Activated naive CD4-positive, alpha-beta T cell treated with anti-CD3 and anti-CD28 coated beads for 36 hours (primary cell): ENCODE measurements at regions of chr2 and their contacts with region 1.

Region 1: DNA sequence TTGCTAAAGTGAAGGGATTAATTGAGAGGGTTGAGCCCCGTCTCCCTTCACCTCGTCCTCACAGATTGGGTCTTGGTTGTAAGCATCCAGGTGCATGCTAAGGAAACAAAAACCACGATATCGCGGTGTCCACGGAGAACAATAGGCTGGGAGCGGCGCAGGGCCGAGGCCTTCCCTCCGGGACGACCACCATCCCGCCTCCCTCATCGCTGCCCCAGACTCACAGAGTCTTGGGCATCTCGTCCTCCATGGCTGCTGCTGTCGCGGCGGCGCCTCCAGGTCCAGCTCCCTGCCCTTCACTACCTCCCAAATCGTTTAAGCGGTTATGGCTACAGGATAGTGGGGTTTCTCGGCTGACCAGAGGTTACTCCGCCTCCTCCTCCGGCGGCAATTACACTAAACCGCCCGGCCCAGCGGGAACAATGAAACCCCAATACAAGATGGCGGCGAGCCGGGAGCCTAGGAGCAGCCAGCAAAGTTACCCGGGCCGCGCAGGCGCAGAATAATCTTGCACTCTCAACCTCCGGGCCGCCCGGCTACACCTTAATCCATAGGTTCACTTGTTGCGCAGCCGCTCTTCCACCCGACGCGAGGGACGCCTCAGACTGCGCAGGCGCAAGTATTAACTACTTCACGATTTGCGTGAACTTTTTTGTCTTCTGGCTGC is at the start of gene TIA1:
- DNase-seq: peak; percentile 99
- H3K4me3 Mint-ChIP-seq: peak within 1 kb of the TSS; percentile 99
- H3K27ac Mint-ChIP-seq: peak within 1 kb of the TSS; percentile 98
- H3K4me1 Mint-ChIP-seq: peaks cover 32% of the 10 kb centered on the region
- H3K27me3 Mint-ChIP-seq: no peaks in the 10 kb centered on the region
- total RNA-seq, gene TIA1: 83.2 to 83.9 TPM

Region 2: GRCh38 chr2:68336192-68336591 is 1912.1 kb before region 1 on chr2:
- CTCF ChIA-PET with region 1: no interaction called
- intact Hi-C with region 1: no loop called
- DNase-seq: no peak
- H3K4me3 Mint-ChIP-seq: no peak overlapping the region
- H3K27ac Mint-ChIP-seq: no peak overlapping the region
- H3K4me1 Mint-ChIP-seq: no peaks in the 10 kb centered on the region
- H3K27me3 Mint-ChIP-seq: peaks cover 17% of the 10 kb centered on the region

Region 3: GRCh38 chr2:69893684-69894551 is 354.4 kb before region 1 on chr2 and contains the start of gene SNRNP27:
- CTCF ChIA-PET with region 1: no interaction called
- intact Hi-C with region 1: loop called (anchors 5 kb)
- DNase-seq: peak; percentile 91
- H3K4me3 Mint-ChIP-seq: peak within 1 kb of the TSS; percentile 98
- H3K27ac Mint-ChIP-seq: peak within 1 kb of the TSS; percentile 97
- H3K4me1 Mint-ChIP-seq: peaks cover 41% of the 10 kb centered on the region
- H3K27me3 Mint-ChIP-seq: no peaks in the 10 kb centered on the region
- total RNA-seq, gene SNRNP27: 56.7 to 64.6 TPM

Region 4: GRCh38 chr2:70070541-70071268 is 177.6 kb before region 1 on chr2:
- CTCF ChIA-PET with region 1: no interaction called
- intact Hi-C with region 1: loop called (anchors 5 kb)
- DNase-seq: peak; percentile 76
- H3K4me3 Mint-ChIP-seq: peak overlapping the region; percentile 54
- H3K27ac Mint-ChIP-seq: peak overlapping the region; percentile 94
- H3K4me1 Mint-ChIP-seq: peaks cover 57% of the 10 kb centered on the region
- H3K27me3 Mint-ChIP-seq: no peaks in the 10 kb centered on the region

Region 5: DNA sequence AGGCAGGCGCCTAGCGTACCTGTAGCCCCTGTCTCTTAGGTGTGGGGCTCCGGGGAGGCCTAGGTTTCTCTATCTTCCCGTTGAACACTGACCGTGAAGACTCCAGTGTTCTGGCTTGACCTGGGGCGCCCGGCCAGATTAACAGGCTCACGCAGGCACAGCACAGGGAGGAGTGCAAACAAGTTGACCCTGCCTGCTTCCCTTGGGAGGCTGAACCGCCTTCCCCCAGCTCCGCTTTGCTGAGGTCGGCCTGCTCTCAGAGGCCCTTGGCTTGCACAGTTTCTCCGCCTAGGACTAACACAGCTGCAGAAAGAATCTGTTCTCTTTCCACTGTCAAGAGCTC is 10.2 kb after region 1 on chr2:
- CTCF ChIA-PET with region 1: no interaction called
- intact Hi-C with region 1: loop called (anchors 1 kb)
- DNase-seq: no peak
- H3K4me3 Mint-ChIP-seq: peak overlapping the region; percentile 91
- H3K27ac Mint-ChIP-seq: no peak overlapping the region
- H3K4me1 Mint-ChIP-seq: peaks cover 34% of the 10 kb centered on the region
- H3K27me3 Mint-ChIP-seq: no peaks in the 10 kb centered on the region

Region 6: GRCh38 chr2:70391988-70392387 is 143.7 kb after region 1 on chr2:
- CTCF ChIA-PET with region 1: no interaction called
- intact Hi-C with region 1: no loop called
- DNase-seq: no peak
- H3K4me3 Mint-ChIP-seq: no peak overlapping the region
- H3K27ac Mint-ChIP-seq: no peak overlapping the region
- H3K4me1 Mint-ChIP-seq: no peaks in the 10 kb centered on the region
- H3K27me3 Mint-ChIP-seq: no peaks in the 10 kb centered on the region